Activated CD8-positive, alpha-beta T cell treated with anti-CD3 and anti-CD28 coated beads, Interleukin-2, amount 10 ng/mL, durations not matched to agents 7 days and 5 days (primary cell): ENCODE measurements at regions of chr12 and their contacts with region 1.

Region 1: DNA sequence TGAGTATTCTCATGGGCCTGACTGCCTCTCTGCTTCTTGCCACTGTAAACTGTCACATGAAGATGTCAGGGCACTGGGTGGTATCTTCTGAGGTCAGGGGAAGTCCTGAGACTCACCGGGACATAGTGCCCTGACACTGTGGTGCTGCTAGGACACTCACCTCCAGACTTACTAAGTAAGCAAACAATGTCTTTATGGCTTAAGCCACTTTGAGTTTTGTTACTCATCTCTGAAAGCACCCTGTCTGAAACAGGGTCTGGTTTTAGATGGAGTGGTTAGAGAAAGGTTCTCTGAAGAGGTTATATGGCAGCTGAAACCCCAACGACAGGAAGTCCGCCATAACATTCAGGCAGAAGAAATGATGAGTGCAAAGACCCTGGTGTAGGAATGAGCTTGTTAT is 22.7 kb downstream of the GPR19 start:
- DNase-seq: no peak
- ATAC-seq: peak; percentile 57
- H3K4me3 Mint-ChIP-seq: no peak overlapping the region
- H3K27ac Mint-ChIP-seq: no peak overlapping the region
- H3K4me1 Mint-ChIP-seq: peaks cover 25% of the 10 kb centered on the region
- H3K27me3 Mint-ChIP-seq: no peaks in the 10 kb centered on the region

Region 2: DNA sequence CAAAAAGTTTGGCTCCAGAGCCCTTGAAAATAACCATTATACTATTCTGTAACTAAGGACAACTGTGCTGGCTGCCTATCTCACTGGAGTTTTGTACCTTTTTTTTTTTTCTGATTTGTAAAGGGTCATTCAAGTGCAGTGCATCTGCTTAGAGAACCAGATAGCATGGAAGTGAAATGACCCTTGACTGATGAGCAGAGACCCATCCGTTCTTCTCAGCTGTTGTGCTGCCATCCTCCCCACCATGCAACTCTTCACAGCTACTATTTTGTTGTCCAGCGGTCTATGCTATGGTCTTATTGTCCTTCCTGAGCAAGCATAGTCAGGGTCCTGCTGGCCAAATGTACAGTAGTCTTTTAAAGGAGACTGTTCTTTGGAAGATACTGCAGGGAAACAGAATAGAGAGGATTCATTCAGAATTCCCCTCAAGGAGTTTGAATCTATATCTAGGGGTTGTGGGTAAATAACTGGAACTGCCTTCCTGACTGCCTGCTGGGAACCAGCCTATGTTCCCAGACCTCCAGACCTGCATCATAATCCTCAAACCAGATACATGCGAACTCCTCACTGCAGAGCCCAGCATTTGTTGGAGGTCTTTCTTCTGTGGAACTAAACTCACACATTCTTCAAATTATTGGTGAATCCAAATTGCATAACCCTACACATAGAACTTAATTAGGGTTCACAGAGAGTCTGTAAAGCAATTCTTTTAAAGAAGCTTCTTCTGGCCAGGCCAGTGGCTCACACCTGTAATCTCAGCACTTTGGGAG is 18.4 kb before region 1 on chr12:
- CTCF ChIA-PET with region 1: interaction called, 28 read pairs
- POLR2A ChIA-PET with region 1: no interaction called
- DNase-seq: no peak
- ATAC-seq: no peak
- H3K4me3 Mint-ChIP-seq: no peak overlapping the region
- H3K27ac Mint-ChIP-seq: no peak overlapping the region
- H3K4me1 Mint-ChIP-seq: peaks cover 8% of the 10 kb centered on the region
- H3K27me3 Mint-ChIP-seq: no peaks in the 10 kb centered on the region